ENCODE measurements at regions of chr2 and their contacts with region 1.

Region 1: GRCh38 chr2:10122386-10123280 is at the start of gene RRM2:
- DNase-seq: peak; percentile 75 to 93 (median 87)
- ATAC-seq: peak; percentile 75
- H3K4me3 ChIP-seq: peak within 1 kb of the TSS; percentile 49 to 60
- H3K4me3 Mint-ChIP-seq: peak within 1 kb of the TSS; percentile 96
- H3K27ac ChIP-seq: no peak within 1 kb of the TSS
- H3K27ac Mint-ChIP-seq: no peak within 1 kb of the TSS
- H3K4me1 ChIP-seq: peaks cover 33% of the 10 kb centered on the region
- H3K4me1 Mint-ChIP-seq: peaks cover 44% of the 10 kb centered on the region
- H3K27me3 ChIP-seq: peaks cover 13 to 17% of the 10 kb centered on the region in 2 experiments
- H3K27me3 Mint-ChIP-seq: peaks cover 19% of the 10 kb centered on the region
- CTCF ChIP-seq: no peak
- total RNA-seq, gene RRM2: 1.6 to 2.1 TPM

Region 2: DNA sequence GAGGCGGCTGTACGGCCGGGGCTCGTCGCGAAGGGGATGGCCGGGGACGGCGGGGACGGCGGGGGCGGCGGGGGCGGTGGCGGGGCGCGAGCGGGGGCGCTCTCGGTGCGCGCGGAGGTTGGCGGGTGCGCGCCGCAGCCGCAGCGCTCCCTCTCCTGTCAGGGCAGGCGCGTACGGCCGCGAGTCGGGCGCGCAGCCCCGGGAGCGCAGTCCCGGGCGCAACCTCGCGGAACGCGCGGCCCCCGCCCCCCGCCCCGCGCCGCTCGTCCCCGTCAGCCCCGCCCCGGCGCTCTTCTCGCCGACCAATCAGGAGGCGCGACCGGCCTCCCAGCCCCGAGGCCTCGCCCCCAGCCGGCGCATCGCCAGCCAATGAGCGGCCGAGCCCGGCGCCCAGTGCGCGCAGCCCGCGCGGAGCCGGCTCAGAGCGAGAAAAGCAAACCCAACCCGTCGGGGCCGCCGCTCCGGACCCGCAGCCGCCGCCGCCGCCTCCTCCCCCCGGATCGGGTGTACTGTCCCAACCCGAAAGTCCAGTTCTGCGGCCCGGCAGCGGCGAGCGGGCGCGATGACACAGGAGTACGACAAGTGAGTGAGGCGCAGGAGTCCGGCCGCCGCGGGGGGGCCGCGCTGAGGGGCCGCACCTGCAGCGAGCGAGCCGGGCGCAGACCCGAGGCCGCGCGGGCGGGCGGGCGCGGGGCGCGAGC is 171.2 kb before region 1 on chr2 and contains the start of gene GRHL1:
- CTCF ChIA-PET with region 1: no interaction called
- POLR2A ChIA-PET with region 1: no interaction called
- intact Hi-C with region 1: loop called (anchors 5 kb)
- DNase-seq: peak; percentile 77 to 96 (median 89)
- ATAC-seq: peak; percentile 94
- H3K4me3 ChIP-seq: peak within 1 kb of the TSS; percentile 52 to 58
- H3K4me3 Mint-ChIP-seq: peak within 1 kb of the TSS; percentile 84
- H3K27ac ChIP-seq: no peak within 1 kb of the TSS
- H3K27ac Mint-ChIP-seq: peak within 1 kb of the TSS; percentile 41
- H3K4me1 ChIP-seq: peaks cover 11% of the 10 kb centered on the region
- H3K4me1 Mint-ChIP-seq: peaks cover 6% of the 10 kb centered on the region
- H3K27me3 ChIP-seq: peaks cover 8% of the 10 kb centered on the region in 2 experiments
- H3K27me3 Mint-ChIP-seq: peaks cover 42% of the 10 kb centered on the region
- CTCF ChIP-seq: no peak
- total RNA-seq, gene GRHL1: 0.76 to 0.86 TPM

Region 3: DNA sequence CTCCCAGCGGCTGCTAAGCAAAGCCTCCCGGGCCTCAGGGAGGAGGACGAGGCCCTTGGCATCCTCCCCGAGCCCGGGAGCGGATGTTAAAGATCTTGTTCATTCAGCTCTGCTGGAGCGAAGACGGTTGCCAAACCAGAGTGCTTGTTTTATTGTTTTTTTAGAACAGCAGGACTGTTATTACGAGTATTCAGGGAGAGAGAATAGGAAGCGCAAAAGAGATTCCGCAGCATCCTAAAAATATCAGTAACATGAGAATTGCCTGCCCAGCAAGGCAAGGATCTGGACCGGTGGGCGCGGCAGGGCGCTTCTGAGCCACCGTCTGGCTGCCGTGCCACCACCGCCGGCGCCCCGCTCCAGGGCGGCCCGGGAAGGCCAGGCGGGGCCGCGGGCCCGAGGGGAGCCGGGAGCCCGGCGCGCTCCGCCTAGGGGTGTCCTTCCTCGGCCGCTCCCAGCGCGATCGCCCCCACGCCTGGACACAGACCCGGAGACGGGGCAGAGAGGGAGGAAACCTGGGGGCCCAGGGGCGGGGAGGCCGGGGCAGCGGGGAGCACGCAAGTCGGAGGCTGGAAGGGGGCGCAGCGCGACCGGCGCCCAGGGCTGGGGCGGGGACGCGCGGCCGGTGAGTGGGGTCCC is 43.3 kb before region 1 on chr2:
- CTCF ChIA-PET with region 1: no interaction called
- POLR2A ChIA-PET with region 1: no interaction called
- intact Hi-C with region 1: loop called (anchors 2 to 5 kb)
- DNase-seq: peak in 3 of 9 experiments; percentile 12 to 40 (median 31)
- ATAC-seq: peak; percentile 28
- H3K4me3 ChIP-seq: peak overlapping the region in 1 of 2 experiments; percentile 1
- H3K4me3 Mint-ChIP-seq: peak overlapping the region; percentile 84
- H3K27ac ChIP-seq: no peak overlapping the region
- H3K27ac Mint-ChIP-seq: no peak overlapping the region
- H3K4me1 ChIP-seq: peaks cover 22% of the 10 kb centered on the region
- H3K4me1 Mint-ChIP-seq: peaks cover 9% of the 10 kb centered on the region
- H3K27me3 ChIP-seq: peaks cover 21 to 34% of the 10 kb centered on the region in 2 experiments
- H3K27me3 Mint-ChIP-seq: peaks cover 69% of the 10 kb centered on the region
- CTCF ChIP-seq: no peak

Region 4: DNA sequence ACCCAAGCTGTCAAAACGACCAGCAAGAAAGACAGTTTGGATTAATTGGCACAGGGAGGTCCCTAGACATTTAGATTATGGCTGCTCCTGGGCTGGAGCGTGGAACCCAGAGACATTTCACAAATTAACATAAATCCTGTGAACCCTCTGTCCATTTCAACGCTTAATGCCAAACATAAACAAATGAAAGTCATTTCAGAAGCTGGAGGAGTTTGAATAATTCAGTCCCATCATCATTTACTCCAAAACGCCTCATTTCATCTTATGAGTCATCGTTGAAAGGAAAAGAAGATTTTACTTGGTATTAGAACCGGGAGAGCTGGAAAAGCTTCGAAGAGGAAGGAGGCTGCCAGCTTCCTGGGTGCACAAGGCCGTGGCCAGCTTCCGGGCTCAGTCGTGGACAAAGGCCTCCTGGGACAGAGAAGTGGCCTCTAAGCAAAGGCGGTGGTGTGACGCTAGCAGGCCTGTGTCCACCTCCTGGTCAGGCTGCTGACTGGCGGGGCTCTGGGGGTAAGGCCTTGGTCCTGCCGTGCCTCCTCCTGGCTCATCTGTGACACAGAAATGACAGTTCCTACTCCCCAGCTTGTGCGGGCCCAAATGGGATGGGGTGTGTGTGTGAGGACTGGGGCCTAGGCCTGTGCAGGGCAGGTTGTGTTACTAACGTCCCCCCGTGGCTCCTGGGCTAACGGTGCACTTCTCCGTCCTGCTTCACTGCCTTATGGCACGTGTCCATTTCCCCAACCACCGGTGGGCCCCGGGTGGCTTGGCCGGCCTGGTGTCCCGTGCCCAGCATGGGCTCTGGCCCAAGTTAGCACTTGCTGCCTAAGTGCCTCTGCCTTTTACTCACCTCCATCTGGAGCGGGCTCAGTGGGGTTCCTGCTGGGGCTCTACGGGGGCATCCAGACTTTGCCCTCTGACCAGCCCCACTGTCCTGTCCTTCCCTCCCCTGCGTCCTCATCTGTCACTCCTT is 71.5 kb after region 1 on chr2:
- CTCF ChIA-PET with region 1: no interaction called
- POLR2A ChIA-PET with region 1: no interaction called
- intact Hi-C with region 1: no loop called
- DNase-seq: no peak
- ATAC-seq: no peak
- H3K4me3 ChIP-seq: no peak overlapping the region
- H3K4me3 Mint-ChIP-seq: no peak overlapping the region
- H3K27ac ChIP-seq: no peak overlapping the region
- H3K27ac Mint-ChIP-seq: no peak overlapping the region
- H3K4me1 ChIP-seq: no peaks in the 10 kb centered on the region
- H3K4me1 Mint-ChIP-seq: no peaks in the 10 kb centered on the region
- H3K27me3 ChIP-seq: no peaks in the 10 kb centered on the region
- H3K27me3 Mint-ChIP-seq: no peaks in the 10 kb centered on the region
- CTCF ChIP-seq: no peak

Region 5: GRCh38 chr2:10267551-10268465 is 145.2 kb after region 1 on chr2:
- CTCF ChIA-PET with region 1: interaction called, 3 read pairs
- POLR2A ChIA-PET with region 1: no interaction called
- intact Hi-C with region 1: loop called in 1 of 2 experiments (anchors 1 kb)
- DNase-seq: no peak
- ATAC-seq: no peak
- H3K4me3 ChIP-seq: no peak overlapping the region
- H3K4me3 Mint-ChIP-seq: no peak overlapping the region
- H3K27ac ChIP-seq: no peak overlapping the region
- H3K27ac Mint-ChIP-seq: no peak overlapping the region
- H3K4me1 ChIP-seq: peaks cover 10% of the 10 kb centered on the region
- H3K4me1 Mint-ChIP-seq: peaks cover 6% of the 10 kb centered on the region
- H3K27me3 ChIP-seq: no peaks in the 10 kb centered on the region
- H3K27me3 Mint-ChIP-seq: no peaks in the 10 kb centered on the region
- CTCF ChIP-seq: no peak

Region 6: DNA sequence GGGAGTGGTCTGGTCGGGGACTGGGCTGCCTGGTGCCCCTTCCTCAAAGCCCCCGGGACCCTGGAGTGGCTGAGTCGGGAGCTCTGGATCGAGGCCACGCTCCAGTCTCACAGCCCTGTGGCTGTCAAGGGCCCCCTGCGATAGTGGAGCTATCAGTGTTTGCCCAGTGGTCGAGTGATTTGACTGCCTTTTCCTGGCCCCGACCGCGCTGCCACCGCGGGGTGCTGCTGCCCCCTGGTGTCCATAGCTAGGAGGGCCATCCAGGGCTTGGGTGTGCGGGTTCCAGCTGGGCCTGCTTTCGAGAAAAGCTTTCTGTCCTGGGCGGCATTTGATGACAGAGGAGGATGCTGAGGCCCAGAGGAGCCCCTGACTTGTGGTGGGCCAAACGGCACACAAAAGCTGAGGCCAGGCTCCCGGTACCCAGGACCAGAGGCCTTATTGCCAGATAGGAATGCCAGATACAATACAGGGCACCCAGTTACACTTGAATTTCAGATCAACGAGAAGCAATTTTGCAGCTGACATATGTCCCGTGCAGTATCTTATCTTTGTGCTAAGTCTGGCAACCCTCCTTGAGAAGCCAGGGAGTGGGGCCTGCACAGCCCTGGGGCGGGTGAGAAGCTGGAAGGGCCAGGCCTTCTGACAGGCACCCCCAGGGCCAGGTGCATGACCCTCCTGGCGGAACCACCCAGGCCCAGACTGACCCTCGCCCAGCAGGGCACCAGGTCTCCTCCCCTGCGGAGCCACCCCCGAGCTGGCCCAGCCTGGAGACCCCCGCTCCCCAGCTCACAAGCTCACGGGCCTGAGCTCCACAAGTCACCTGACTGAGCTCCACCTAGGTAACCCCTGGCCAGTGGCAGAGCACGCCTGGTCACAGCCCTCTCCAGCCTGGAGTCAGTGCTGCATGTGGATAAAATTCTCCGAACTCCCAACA is 312.5 kb after region 1 on chr2:
- CTCF ChIA-PET with region 1: interaction called, 135 read pairs
- POLR2A ChIA-PET with region 1: no interaction called
- intact Hi-C with region 1: loop called in 1 of 2 experiments (anchors 1 kb)
- DNase-seq: peak; percentile 51 to 86 (median 74)
- ATAC-seq: peak; percentile 74
- H3K4me3 ChIP-seq: no peak overlapping the region
- H3K4me3 Mint-ChIP-seq: no peak overlapping the region
- H3K27ac ChIP-seq: no peak overlapping the region
- H3K27ac Mint-ChIP-seq: no peak overlapping the region
- H3K4me1 ChIP-seq: peaks cover 14% of the 10 kb centered on the region
- H3K4me1 Mint-ChIP-seq: peaks cover 16% of the 10 kb centered on the region
- H3K27me3 ChIP-seq: peaks cover 0 to 4% of the 10 kb centered on the region in 2 experiments
- H3K27me3 Mint-ChIP-seq: peaks cover 2% of the 10 kb centered on the region
- CTCF ChIP-seq: peak; percentile 93

Region 7: GRCh38 chr2:10668402-10669012 is 545.9 kb after region 1 on chr2:
- CTCF ChIA-PET with region 1: interaction called, 4 read pairs
- POLR2A ChIA-PET with region 1: no interaction called
- intact Hi-C with region 1: loop called (anchors 1 to 5 kb)
- DNase-seq: peak in 3 of 9 experiments; percentile 39 to 78 (median 74)
- ATAC-seq: peak; percentile 77
- H3K4me3 ChIP-seq: no peak overlapping the region
- H3K4me3 Mint-ChIP-seq: no peak overlapping the region
- H3K27ac ChIP-seq: no peak overlapping the region
- H3K27ac Mint-ChIP-seq: no peak overlapping the region
- H3K4me1 ChIP-seq: no peaks in the 10 kb centered on the region
- H3K4me1 Mint-ChIP-seq: peaks cover 2% of the 10 kb centered on the region
- H3K27me3 ChIP-seq: no peaks in the 10 kb centered on the region
- H3K27me3 Mint-ChIP-seq: no peaks in the 10 kb centered on the region
- CTCF ChIP-seq: peak; percentile 86

Region 8: DNA sequence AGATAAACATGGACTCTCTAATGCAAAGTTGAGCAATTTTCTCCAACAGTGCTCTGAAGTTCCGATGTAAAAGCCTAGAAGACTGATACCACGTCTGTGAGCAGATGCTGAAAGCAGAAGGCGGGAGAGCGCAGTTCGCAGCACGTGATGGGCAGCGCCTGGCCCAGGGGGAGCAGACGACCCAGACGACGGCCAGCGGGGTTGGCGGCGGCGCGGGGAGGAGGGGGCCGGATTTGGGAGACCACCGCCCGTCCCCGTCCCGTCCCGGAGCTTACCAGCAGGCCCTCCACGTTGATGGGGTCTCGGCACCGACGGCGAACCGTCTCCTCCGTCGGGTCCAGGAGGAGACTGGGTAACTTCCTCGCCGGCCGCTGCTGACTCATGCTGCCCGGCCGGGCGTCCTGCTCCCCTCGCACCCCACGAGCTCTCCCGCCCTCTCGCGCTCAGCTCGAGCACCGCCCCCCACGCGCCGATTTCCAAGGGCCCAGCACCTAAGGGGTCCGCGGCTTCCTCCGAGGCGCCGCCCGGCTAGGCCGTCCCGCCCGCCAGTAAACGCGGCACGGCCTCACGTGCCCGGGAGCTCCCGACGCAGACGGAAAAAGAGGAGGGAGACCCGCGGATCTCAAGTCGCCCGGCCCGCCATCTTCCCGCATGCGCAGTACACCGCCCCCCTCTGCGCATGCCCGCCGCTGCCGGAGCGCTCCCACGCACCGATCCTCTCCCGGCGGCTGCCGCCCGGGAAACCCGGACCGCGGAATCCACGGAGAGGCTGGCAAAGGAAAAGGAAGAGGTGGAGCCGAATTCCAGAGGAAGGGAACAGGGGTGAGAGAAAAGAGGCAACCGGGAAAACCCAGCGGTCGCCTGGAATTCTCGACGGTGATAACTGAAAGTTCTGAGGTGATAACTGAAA is 1343.1 kb after region 1 on chr2 and contains the start of gene E2F6:
- CTCF ChIA-PET with region 1: no interaction called
- POLR2A ChIA-PET with region 1: no interaction called
- intact Hi-C with region 1: loop called in 1 of 2 experiments (anchors 5 kb)
- DNase-seq: peak; percentile 68 to 91 (median 81)
- ATAC-seq: peak; percentile 85
- H3K4me3 ChIP-seq: peak within 1 kb of the TSS; percentile 83 to 87
- H3K4me3 Mint-ChIP-seq: peak within 1 kb of the TSS; percentile 96
- H3K27ac ChIP-seq: peak within 1 kb of the TSS; percentile 51 to 70
- H3K27ac Mint-ChIP-seq: peak within 1 kb of the TSS; percentile 91
- H3K4me1 ChIP-seq: peaks cover 13% of the 10 kb centered on the region
- H3K4me1 Mint-ChIP-seq: peaks cover 37% of the 10 kb centered on the region
- H3K27me3 ChIP-seq: no peaks in the 10 kb centered on the region
- H3K27me3 Mint-ChIP-seq: no peaks in the 10 kb centered on the region
- CTCF ChIP-seq: no peak
- total RNA-seq, gene E2F6: 4.9 to 5.0 TPM

Measured in CD8-positive, alpha-beta T cell (primary cell).